ENCODE measurements at regions of chr17 and their contacts with region 1.

Region 1: GRCh38 chr17:8435245-8436168 is at the start of gene NDEL1:
- DNase-seq: peak; percentile 99
- ATAC-seq: peak; percentile 92
- H3K4me3 ChIP-seq: peak within 1 kb of the TSS; percentile 86 to 92
- H3K4me3 Mint-ChIP-seq: peak within 1 kb of the TSS; percentile 98
- H3K27ac ChIP-seq: peak within 1 kb of the TSS; percentile 98 to 100
- H3K27ac Mint-ChIP-seq: peak within 1 kb of the TSS; percentile 97
- H3K4me1 ChIP-seq: peaks cover 34% of the 10 kb centered on the region
- H3K4me1 Mint-ChIP-seq: peaks cover 42% of the 10 kb centered on the region
- H3K27me3 ChIP-seq: no peaks in the 10 kb centered on the region
- H3K27me3 Mint-ChIP-seq: no peaks in the 10 kb centered on the region
- CTCF ChIP-seq: no peak
- total RNA-seq, gene NDEL1: 266 to 279 TPM

Region 2: GRCh38 chr17:7931709-7932482 is 503.6 kb before region 1 on chr17 and contains the starts of genes CNTROB and TRAPPC1:
- CTCF ChIA-PET with region 1: no interaction called
- POLR2A ChIA-PET with region 1: no interaction called
- intact Hi-C with region 1: loop called in 1 of 2 experiments (anchors 5 kb)
- DNase-seq: peak; percentile 99 to 100 (median 99)
- ATAC-seq: peak; percentile 93
- H3K4me3 ChIP-seq: peak within 1 kb of the TSS; percentile 96
- H3K4me3 Mint-ChIP-seq: peak within 1 kb of the TSS; percentile 100
- H3K27ac ChIP-seq: peak within 1 kb of the TSS; percentile 85
- H3K27ac Mint-ChIP-seq: peak within 1 kb of the TSS; percentile 99
- H3K4me1 ChIP-seq: peaks cover 22% of the 10 kb centered on the region
- H3K4me1 Mint-ChIP-seq: peaks cover 50% of the 10 kb centered on the region
- H3K27me3 ChIP-seq: no peaks in the 10 kb centered on the region
- H3K27me3 Mint-ChIP-seq: no peaks in the 10 kb centered on the region
- CTCF ChIP-seq: no peak
- total RNA-seq, gene CNTROB: 20.1 to 23.6 TPM
- total RNA-seq, gene TRAPPC1: 29.6 to 39.4 TPM

Region 3: DNA sequence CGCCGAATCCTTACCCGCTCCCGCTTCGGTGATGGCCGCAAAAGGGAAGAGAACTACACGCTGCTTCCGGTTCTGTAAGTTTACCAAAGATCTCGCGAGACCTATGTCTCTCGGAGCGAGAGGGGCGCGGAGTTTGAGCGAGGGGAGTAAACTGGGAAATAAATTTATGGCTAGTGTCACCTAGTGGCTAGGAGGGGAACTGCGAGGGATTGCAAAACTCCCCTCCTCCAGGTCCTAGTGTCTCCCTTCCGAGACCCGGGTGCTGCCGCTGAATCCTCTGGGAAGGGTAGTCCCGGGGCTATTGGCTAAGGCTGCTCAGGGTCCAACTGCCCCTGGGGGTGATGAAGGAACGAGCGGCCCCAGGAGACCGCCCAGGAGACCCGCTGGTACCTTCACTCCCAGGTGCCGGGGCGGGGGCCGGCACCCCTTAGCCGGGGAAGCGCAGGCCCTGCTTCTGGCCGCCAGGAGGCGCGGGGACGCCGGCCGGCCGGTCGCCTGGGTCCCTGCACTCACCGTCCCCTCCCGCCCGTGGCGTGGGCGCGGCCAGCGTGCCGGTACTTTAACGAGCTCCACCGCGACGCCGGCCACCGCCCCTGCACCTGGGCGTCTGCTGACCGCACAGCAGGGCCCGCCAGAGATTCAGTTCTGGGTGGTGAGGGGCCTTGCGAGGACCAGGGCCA is 52.2 kb before region 1 on chr17 and contains the start of gene RPL26:
- CTCF ChIA-PET with region 1: interaction called, 3 read pairs
- POLR2A ChIA-PET with region 1: interaction called, 3 read pairs
- intact Hi-C with region 1: loop called (anchors 1 kb)
- DNase-seq: peak; percentile 88 to 98 (median 95)
- ATAC-seq: peak; percentile 89
- H3K4me3 ChIP-seq: peak within 1 kb of the TSS; percentile 70 to 72
- H3K4me3 Mint-ChIP-seq: peak within 1 kb of the TSS; percentile 96
- H3K27ac ChIP-seq: peak within 1 kb of the TSS; percentile 71 to 76
- H3K27ac Mint-ChIP-seq: peak within 1 kb of the TSS; percentile 93
- H3K4me1 ChIP-seq: peaks cover 40% of the 10 kb centered on the region
- H3K4me1 Mint-ChIP-seq: peaks cover 69% of the 10 kb centered on the region
- H3K27me3 ChIP-seq: no peaks in the 10 kb centered on the region
- H3K27me3 Mint-ChIP-seq: no peaks in the 10 kb centered on the region
- CTCF ChIP-seq: peak; percentile 100
- total RNA-seq, gene RPL26: 2,888 to 2,889 TPM

Region 4: GRCh38 chr17:8409966-8410864 is 25.3 kb before region 1 on chr17:
- CTCF ChIA-PET with region 1: interaction called, 6 read pairs
- POLR2A ChIA-PET with region 1: interaction called, 4 read pairs
- intact Hi-C with region 1: loop called (anchors 1 kb)
- DNase-seq: peak; percentile 47 to 88 (median 82)
- ATAC-seq: peak; percentile 92
- H3K4me3 ChIP-seq: no peak overlapping the region
- H3K4me3 Mint-ChIP-seq: no peak overlapping the region
- H3K27ac ChIP-seq: no peak overlapping the region
- H3K27ac Mint-ChIP-seq: no peak overlapping the region
- H3K4me1 ChIP-seq: peaks cover 3% of the 10 kb centered on the region
- H3K4me1 Mint-ChIP-seq: peaks cover 12% of the 10 kb centered on the region
- H3K27me3 ChIP-seq: peaks cover 0 to 3% of the 10 kb centered on the region in 2 experiments
- H3K27me3 Mint-ChIP-seq: peaks cover 9% of the 10 kb centered on the region
- CTCF ChIP-seq: peak; percentile 86

Region 5: GRCh38 chr17:8745586-8746500 is 310.3 kb after region 1 on chr17:
- CTCF ChIA-PET with region 1: interaction called, 16 read pairs
- POLR2A ChIA-PET with region 1: no interaction called
- intact Hi-C with region 1: no loop called
- DNase-seq: peak; percentile 56 to 91 (median 82)
- ATAC-seq: peak; percentile 72
- H3K4me3 ChIP-seq: peak overlapping the region; percentile 74 to 77
- H3K4me3 Mint-ChIP-seq: peak overlapping the region; percentile 94
- H3K27ac ChIP-seq: peak overlapping the region; percentile 69 to 82
- H3K27ac Mint-ChIP-seq: peak overlapping the region; percentile 94
- H3K4me1 ChIP-seq: peaks cover 15% of the 10 kb centered on the region
- H3K4me1 Mint-ChIP-seq: peaks cover 25% of the 10 kb centered on the region
- H3K27me3 ChIP-seq: no peaks in the 10 kb centered on the region
- H3K27me3 Mint-ChIP-seq: no peaks in the 10 kb centered on the region
- CTCF ChIP-seq: peak; percentile 94

Region 6: GRCh38 chr17:8757189-8757588 is 321.7 kb after region 1 on chr17:
- CTCF ChIA-PET with region 1: no interaction called
- POLR2A ChIA-PET with region 1: no interaction called
- intact Hi-C with region 1: no loop called
- DNase-seq: no peak
- ATAC-seq: no peak
- H3K4me3 ChIP-seq: no peak overlapping the region
- H3K4me3 Mint-ChIP-seq: no peak overlapping the region
- H3K27ac ChIP-seq: no peak overlapping the region
- H3K27ac Mint-ChIP-seq: no peak overlapping the region
- H3K4me1 ChIP-seq: no peaks in the 10 kb centered on the region
- H3K4me1 Mint-ChIP-seq: no peaks in the 10 kb centered on the region
- H3K27me3 ChIP-seq: no peaks in the 10 kb centered on the region
- H3K27me3 Mint-ChIP-seq: peaks cover 13% of the 10 kb centered on the region
- CTCF ChIP-seq: no peak

Region 7: GRCh38 chr17:8900626-8901585 is 465.4 kb after region 1 on chr17:
- CTCF ChIA-PET with region 1: no interaction called
- POLR2A ChIA-PET with region 1: no interaction called
- intact Hi-C with region 1: loop called (anchors 1 to 5 kb)
- DNase-seq: peak in 5 of 9 experiments; percentile 21 to 60 (median 49)
- ATAC-seq: no peak
- H3K4me3 ChIP-seq: no peak overlapping the region
- H3K4me3 Mint-ChIP-seq: peak overlapping the region; percentile 29
- H3K27ac ChIP-seq: peak overlapping the region in 1 of 2 experiments; percentile 90
- H3K27ac Mint-ChIP-seq: peak overlapping the region; percentile 93
- H3K4me1 ChIP-seq: peaks cover 58% of the 10 kb centered on the region
- H3K4me1 Mint-ChIP-seq: peaks cover 59% of the 10 kb centered on the region
- H3K27me3 ChIP-seq: no peaks in the 10 kb centered on the region
- H3K27me3 Mint-ChIP-seq: no peaks in the 10 kb centered on the region
- CTCF ChIP-seq: no peak

Region 8: GRCh38 chr17:9170853-9171252 is 735.3 kb after region 1 on chr17:
- CTCF ChIA-PET with region 1: no interaction called
- POLR2A ChIA-PET with region 1: no interaction called
- intact Hi-C with region 1: no loop called
- DNase-seq: no peak
- ATAC-seq: no peak
- H3K4me3 ChIP-seq: no peak overlapping the region
- H3K4me3 Mint-ChIP-seq: no peak overlapping the region
- H3K27ac ChIP-seq: no peak overlapping the region
- H3K27ac Mint-ChIP-seq: no peak overlapping the region
- H3K4me1 ChIP-seq: no peaks in the 10 kb centered on the region
- H3K4me1 Mint-ChIP-seq: no peaks in the 10 kb centered on the region
- H3K27me3 ChIP-seq: no peaks in the 10 kb centered on the region
- H3K27me3 Mint-ChIP-seq: peaks cover 9% of the 10 kb centered on the region
- CTCF ChIP-seq: no peak

Measured in CD8-positive, alpha-beta T cell (primary cell).